ENCODE measurements at regions of chr14 and their contacts with region 1.

Region 1: GRCh38 chr14:102063091-102063802 is 23.6 kb downstream of the HSP90AA1 start:
- DNase-seq: peak; percentile 88 to 89
- H3K4me3 ChIP-seq: no peak overlapping the region
- H3K27ac ChIP-seq: peak overlapping the region in 1 of 3 donors; percentile 25
- H3K4me1 ChIP-seq: peaks cover 3 to 10% of the 10 kb centered on the region in 2 donors
- H3K27me3 ChIP-seq: no peaks in the 10 kb centered on the region
- CTCF ChIP-seq: peak; percentile 12 to 63 (median 50)
- POLR2A ChIP-seq: no peak

Region 2: DNA sequence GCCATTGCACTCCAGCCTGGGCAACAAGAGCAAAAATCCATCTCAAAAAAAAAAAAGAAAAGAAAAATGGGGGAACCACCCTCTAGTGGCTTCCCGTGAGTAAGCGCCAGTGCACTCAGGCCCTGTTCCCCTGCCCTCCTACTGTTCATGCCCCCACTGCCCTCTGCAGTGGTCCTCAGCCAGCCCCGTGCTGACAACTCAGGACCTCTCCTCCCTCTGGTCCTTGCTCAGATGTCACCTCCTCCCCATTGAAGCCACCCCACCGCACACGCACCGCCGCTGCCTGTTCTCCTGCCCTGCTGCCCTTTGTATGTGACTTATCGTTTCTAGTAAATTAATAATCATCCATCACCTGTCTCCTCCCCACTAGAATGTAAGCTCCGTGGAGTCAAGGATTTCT is 157.6 kb before region 1 on chr14:
- intact Hi-C with region 1: no loop called
- DNase-seq: no peak
- H3K4me3 ChIP-seq: no peak overlapping the region
- H3K27ac ChIP-seq: no peak overlapping the region
- H3K4me1 ChIP-seq: no peaks in the 10 kb centered on the region
- H3K27me3 ChIP-seq: no peaks in the 10 kb centered on the region
- CTCF ChIP-seq: no peak
- POLR2A ChIP-seq: no peak

Region 3: GRCh38 chr14:102086972-102087761 is 23.9 kb after region 1 on chr14 and contains the start of gene HSP90AA1:
- intact Hi-C with region 1: no loop called
- DNase-seq: peak; percentile 90
- H3K4me3 ChIP-seq: peak within 1 kb of the TSS; percentile 53 to 94 (median 67)
- H3K27ac ChIP-seq: peak within 1 kb of the TSS; percentile 98 to 100 (median 100)
- H3K4me1 ChIP-seq: peaks cover 41 to 42% of the 10 kb centered on the region in 2 donors
- H3K27me3 ChIP-seq: no peaks in the 10 kb centered on the region
- CTCF ChIP-seq: peak in 2 of 6 experiments; percentile 23 to 29
- POLR2A ChIP-seq: peak; percentile 96 to 99
- total RNA-seq, gene HSP90AA1: 217 to 405 (median 278) TPM

Region 4: GRCh38 chr14:102220031-102220430 is 156.8 kb after region 1 on chr14:
- intact Hi-C with region 1: loop called (anchors 10 kb)
- DNase-seq: no peak
- H3K4me3 ChIP-seq: no peak overlapping the region
- H3K27ac ChIP-seq: no peak overlapping the region
- H3K4me1 ChIP-seq: peaks cover 21 to 31% of the 10 kb centered on the region in 2 donors
- H3K27me3 ChIP-seq: no peaks in the 10 kb centered on the region
- CTCF ChIP-seq: no peak
- POLR2A ChIP-seq: no peak